HEK293 (cell line): ENCODE measurements at regions of chr15 and their contacts with region 1.

Region 1: GRCh38 chr15:81265944-81266775 is 57.8 kb downstream of the STARD5 start:
- H3K4me3 ChIP-seq: peak overlapping the region; percentile 4; the same call in 1 of the 2 replicates
- H3K27ac ChIP-seq: no peak overlapping the region
- H3K4me1 ChIP-seq: no peaks in the 10 kb centered on the region
- CTCF ChIP-seq: peak; percentile 86

Region 2: GRCh38 chr15:80645494-80646065 is 620.6 kb before region 1 on chr15:
- CTCF ChIA-PET with region 1: no interaction called
- POLR2A ChIA-PET with region 1: interaction called, 11 read pairs
- H3K4me3 ChIP-seq: no peak overlapping the region
- H3K27ac ChIP-seq: no peak overlapping the region
- H3K4me1 ChIP-seq: no peaks in the 10 kb centered on the region
- CTCF ChIP-seq: no peak

Region 3: DNA sequence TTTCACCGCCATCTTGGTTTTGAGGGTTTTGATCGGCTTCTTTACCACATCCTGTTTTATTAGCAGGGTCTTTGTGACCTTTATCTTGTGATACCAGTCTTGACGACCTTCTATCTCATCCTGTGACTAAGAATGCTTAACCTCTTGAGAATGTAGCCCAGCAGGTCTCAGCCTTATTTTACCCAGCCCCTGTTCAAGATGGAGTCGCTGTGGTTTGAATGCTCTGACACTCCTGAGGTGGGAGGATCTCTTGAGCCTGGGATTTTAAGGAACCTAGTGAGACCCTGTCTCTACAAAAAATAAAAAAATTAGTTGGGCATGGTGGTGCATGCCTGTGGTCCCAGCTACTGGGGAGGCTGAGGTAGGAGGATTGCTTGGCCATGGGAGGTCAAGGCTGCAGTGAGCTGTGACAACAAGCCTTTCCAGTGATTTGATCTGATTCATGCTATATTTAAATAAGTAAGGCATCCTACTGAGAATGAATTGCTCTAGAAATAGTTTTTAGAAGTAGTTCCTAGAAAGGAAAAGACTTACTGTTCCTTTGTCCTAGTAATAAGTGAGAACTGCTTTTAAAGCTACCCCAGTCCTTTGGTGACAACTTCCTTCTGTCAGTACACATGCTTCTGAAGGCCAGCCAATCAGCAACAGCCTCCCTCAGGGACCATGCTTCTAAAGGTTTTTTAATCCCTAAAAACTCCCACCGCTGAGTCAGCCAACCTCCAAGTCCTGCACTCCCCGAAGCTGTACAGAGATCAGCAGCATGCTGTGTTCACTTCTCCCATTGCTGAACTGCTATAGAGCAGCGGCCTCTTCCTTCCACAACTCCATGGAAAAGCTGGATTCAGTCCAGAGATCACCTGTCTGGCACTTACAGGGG is 496.1 kb before region 1 on chr15:
- CTCF ChIA-PET with region 1: no interaction called
- POLR2A ChIA-PET with region 1: no interaction called
- H3K4me3 ChIP-seq: no peak overlapping the region
- H3K27ac ChIP-seq: no peak overlapping the region
- H3K4me1 ChIP-seq: peaks cover 13% of the 10 kb centered on the region
- CTCF ChIP-seq: no peak

Region 4: GRCh38 chr15:81000624-81001151 is 265.5 kb before region 1 on chr15 and contains the start of gene TLNRD1:
- CTCF ChIA-PET with region 1: interaction called, 46 read pairs
- POLR2A ChIA-PET with region 1: interaction called, 9 read pairs
- H3K4me3 ChIP-seq: peak within 1 kb of the TSS; percentile 78
- H3K27ac ChIP-seq: peak within 1 kb of the TSS; percentile 94
- H3K4me1 ChIP-seq: peaks cover 7% of the 10 kb centered on the region
- CTCF ChIP-seq: no peak

Region 5: DNA sequence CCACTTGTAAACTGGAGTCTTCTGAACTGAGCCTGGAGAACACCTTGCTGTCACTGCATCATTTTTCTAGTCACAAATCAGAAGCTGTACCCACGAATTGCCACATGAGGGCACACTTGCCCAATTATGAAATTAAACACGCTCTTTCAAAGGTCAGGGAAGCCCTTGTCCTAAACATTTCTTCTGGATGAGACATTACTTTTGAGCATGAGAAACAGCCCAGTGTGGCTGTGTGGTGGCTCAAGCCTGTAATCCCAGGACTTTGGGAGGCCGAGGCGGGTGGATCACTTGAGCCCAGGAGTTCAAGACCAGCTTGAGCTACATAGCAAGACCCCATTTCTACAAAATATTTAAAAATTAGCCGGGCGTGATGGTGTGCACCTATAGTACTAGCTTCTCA is 159.6 kb before region 1 on chr15:
- CTCF ChIA-PET with region 1: interaction called, 530 read pairs
- POLR2A ChIA-PET with region 1: interaction called, 4 read pairs
- H3K4me3 ChIP-seq: no peak overlapping the region
- H3K27ac ChIP-seq: no peak overlapping the region
- H3K4me1 ChIP-seq: no peaks in the 10 kb centered on the region
- CTCF ChIP-seq: peak; percentile 60

Region 6: GRCh38 chr15:81176291-81176893 is 89.8 kb before region 1 on chr15:
- CTCF ChIA-PET with region 1: interaction called, 31 read pairs
- POLR2A ChIA-PET with region 1: no interaction called
- H3K4me3 ChIP-seq: no peak overlapping the region
- H3K27ac ChIP-seq: no peak overlapping the region
- H3K4me1 ChIP-seq: no peaks in the 10 kb centered on the region
- CTCF ChIP-seq: no peak

Region 7: DNA sequence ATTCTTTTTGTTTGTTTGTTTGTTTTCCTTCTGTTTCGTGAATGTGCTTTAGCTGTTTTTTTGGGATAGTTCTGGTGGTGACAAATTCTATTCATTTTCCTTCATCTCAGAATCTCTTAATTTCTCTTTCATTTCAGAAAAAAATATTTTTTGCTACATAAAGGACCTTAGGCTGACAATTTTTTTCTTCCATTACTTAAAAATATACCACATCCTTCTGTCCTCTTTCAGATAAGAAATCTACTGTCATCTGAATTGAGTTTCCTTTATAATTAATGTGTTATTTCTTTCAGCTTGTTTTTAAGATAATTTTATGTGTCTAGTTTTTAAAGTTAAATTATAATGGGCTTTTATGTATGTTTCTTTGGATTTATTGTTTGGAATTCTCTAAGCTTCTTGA is 21.9 kb before region 1 on chr15:
- CTCF ChIA-PET with region 1: interaction called, 18 read pairs
- POLR2A ChIA-PET with region 1: no interaction called
- H3K4me3 ChIP-seq: no peak overlapping the region
- H3K27ac ChIP-seq: no peak overlapping the region
- H3K4me1 ChIP-seq: no peaks in the 10 kb centered on the region
- CTCF ChIP-seq: no peak

Region 8: GRCh38 chr15:81410318-81410753 is 144.2 kb after region 1 on chr15:
- CTCF ChIA-PET with region 1: interaction called, 12 read pairs
- POLR2A ChIA-PET with region 1: no interaction called
- H3K4me3 ChIP-seq: no peak overlapping the region
- H3K27ac ChIP-seq: no peak overlapping the region
- H3K4me1 ChIP-seq: peaks cover 4% of the 10 kb centered on the region
- CTCF ChIP-seq: peak; percentile 63; the same call in 1 of the 2 replicates

Region 9: DNA sequence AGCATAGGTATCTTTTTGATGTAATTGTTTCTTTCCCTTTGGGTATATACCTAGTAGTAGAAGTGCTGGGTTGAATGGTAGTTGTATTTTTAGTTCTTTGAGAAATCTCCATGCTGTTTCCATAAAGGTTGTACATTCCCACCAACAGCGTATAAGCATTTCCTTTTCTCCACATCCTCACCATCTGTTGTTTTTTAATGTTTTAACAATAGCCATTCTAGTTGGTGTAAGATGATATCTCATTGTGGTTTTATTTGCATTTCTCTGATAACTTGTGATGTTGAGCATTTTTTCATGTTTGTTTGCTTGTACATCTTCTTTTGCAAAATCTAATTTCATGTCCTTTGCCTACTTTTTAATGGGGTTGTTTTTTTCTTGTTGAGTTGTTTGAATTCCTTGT is 187.9 kb after region 1 on chr15:
- CTCF ChIA-PET with region 1: no interaction called
- POLR2A ChIA-PET with region 1: no interaction called
- H3K4me3 ChIP-seq: no peak overlapping the region
- H3K27ac ChIP-seq: no peak overlapping the region
- H3K4me1 ChIP-seq: peaks cover 2% of the 10 kb centered on the region; the same call in 1 of the 2 replicates
- CTCF ChIP-seq: no peak